CD4-positive, alpha-beta memory T cell (primary cell): ENCODE measurements at regions of chr3 and their contacts with region 1.

Region 1: DNA sequence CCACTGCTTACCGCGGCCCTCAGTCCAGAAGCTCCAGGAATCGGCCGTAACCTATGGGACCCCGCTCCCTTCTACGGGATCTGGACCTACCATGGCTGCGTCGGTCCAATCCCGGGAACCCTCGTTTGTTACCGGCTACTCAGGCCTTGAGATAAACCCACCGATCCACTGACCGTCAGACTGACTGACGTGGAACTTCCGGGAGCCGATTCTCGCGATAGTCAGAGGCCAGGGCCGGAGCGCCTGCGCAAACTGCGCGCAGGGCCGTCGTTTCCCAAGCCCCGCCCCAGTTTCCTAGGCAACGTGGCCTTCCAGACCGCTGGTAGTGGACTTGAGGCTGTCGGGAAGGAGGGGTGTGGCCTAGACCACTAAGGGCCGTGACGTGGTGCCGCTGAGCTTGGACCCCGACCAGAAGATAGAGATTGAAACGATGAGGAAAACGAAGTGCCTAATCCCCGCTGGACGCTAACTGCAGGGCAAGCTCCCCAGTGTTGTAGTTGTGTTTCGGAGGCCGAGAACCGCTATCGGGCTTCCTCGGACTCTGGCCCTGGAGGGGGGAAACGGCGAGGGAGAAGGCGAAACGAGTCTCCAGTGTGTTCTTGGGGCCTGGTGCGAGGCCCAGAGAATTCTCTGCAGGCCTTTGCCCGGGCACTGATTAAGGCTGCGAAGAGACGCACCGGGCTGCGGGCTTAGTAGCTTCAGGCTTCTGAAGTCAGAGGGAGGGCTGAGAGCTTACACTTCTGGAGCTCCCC is at the start of gene COPB2:
- DNase-seq: peak; percentile 91 to 94 (median 92)
- H3K4me3 ChIP-seq: peak within 1 kb of the TSS; percentile 92 to 97
- H3K4me3 Mint-ChIP-seq: peak within 1 kb of the TSS; percentile 92 to 99 (median 98)
- H3K27ac ChIP-seq: peak within 1 kb of the TSS; percentile 93
- H3K27ac Mint-ChIP-seq: peak within 1 kb of the TSS; percentile 96 to 100 (median 100)
- H3K4me1 ChIP-seq: peaks cover 34% of the 10 kb centered on the region
- H3K4me1 Mint-ChIP-seq: peaks cover 30 to 50% (median 41%) of the 10 kb centered on the region in 4 donors
- H3K27me3 ChIP-seq: no peaks in the 10 kb centered on the region
- H3K27me3 Mint-ChIP-seq: no peaks in the 10 kb centered on the region
- total RNA-seq, gene COPB2: 78.1 to 79.8 TPM

Region 2: DNA sequence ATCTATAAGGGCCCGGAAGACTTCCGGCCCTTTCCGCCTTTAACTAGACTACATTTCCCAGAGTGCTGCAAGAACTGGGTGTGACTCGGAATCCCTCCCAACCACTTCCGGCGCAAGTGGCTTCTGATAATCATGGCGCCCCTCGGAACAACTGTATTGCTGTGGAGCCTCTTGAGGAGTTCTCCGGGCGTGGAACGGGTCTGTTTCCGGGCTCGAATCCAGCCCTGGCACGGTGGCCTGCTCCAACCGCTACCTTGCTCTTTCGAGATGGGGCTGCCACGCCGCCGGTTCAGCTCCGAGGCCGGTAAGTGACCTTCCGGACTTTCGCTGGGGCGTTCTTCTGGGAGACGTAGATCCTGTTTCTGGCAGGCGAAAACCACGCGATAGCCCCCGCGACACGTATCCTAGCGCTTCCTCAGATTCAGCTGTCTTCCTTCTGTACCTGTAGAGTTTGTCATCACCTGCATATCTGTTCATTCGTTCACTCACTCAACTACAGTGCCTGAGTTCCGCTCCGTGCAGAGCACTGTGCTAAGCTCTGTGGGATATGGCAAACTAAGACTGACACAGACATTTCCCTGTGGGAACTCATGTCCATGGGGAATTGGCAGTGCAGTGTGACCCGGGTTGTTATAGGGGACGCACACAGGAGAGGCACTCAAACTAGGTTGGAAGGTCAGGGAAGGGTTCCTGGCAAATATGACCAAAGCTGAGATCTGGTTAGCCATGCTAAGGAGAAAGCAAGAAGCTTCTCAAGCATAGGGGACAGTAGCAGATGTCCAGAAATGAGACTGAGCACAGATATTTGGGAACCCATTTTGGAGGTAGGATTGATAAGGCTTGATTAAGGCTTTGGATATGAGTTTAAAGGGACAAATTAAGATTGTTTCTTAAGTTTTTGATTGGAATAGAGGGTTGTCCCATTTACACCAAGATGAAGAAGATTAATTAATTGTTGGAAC is 45.5 kb before region 1 on chr3 and contains the start of gene MRPS22:
- CTCF ChIA-PET with region 1: no interaction called
- POLR2A ChIA-PET with region 1: interaction called, 13 read pairs
- intact Hi-C with region 1: loop called (anchors 1 kb)
- DNase-seq: peak; percentile 84 to 90 (median 84)
- H3K4me3 ChIP-seq: peak within 1 kb of the TSS; percentile 66 to 95
- H3K4me3 Mint-ChIP-seq: peak within 1 kb of the TSS in 2 of 8 donors; percentile 67 to 71
- H3K27ac ChIP-seq: peak within 1 kb of the TSS; percentile 79
- H3K27ac Mint-ChIP-seq: peak within 1 kb of the TSS in 3 of 7 donors; percentile 78 to 89 (median 81)
- H3K4me1 ChIP-seq: peaks cover 24% of the 10 kb centered on the region
- H3K4me1 Mint-ChIP-seq: peaks cover 3 to 11% (median 7%) of the 10 kb centered on the region in 4 donors
- H3K27me3 ChIP-seq: peaks cover 4% of the 10 kb centered on the region
- H3K27me3 Mint-ChIP-seq: peaks cover 0 to 7% of the 10 kb centered on the region in 2 donors
- total RNA-seq, gene MRPS22: 33.4 to 36.9 TPM

Region 3: DNA sequence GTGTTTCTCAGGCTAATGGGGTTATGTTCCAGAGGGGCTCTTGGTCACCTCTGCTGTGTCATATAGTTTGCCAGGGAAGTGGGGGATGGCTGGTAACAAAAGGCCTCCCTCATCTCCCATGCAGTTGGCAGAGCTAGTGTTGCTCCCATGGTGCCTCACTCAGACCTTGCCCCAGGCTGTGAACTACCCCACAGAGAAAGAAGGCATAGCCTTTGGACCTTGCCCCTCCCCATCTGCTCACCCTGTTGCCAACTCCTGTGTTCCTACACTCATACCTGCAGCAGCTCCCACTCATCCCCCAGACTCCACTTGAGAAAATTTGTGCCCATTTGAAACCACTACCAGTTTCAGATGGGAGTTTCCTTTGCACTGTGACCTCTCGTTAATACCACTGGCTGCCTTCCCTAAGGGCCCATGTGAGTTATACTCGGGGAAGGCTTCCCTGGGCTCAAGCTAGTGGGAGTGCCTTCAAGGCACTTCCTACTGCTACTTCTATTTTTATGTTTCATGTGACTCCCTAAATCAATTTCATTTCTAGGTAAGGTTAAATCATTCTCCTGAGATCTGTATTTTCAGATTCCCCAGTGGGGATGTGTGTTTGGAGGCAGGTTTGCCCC is 25.1 kb after region 1 on chr3:
- CTCF ChIA-PET with region 1: no interaction called
- POLR2A ChIA-PET with region 1: no interaction called
- intact Hi-C with region 1: no loop called
- DNase-seq: no peak
- H3K4me3 ChIP-seq: no peak overlapping the region
- H3K4me3 Mint-ChIP-seq: no peak overlapping the region
- H3K27ac ChIP-seq: no peak overlapping the region
- H3K27ac Mint-ChIP-seq: no peak overlapping the region
- H3K4me1 ChIP-seq: no peaks in the 10 kb centered on the region
- H3K4me1 Mint-ChIP-seq: no peaks in the 10 kb centered on the region
- H3K27me3 ChIP-seq: no peaks in the 10 kb centered on the region
- H3K27me3 Mint-ChIP-seq: peaks cover 0 to 3% of the 10 kb centered on the region in 2 donors

Region 4: DNA sequence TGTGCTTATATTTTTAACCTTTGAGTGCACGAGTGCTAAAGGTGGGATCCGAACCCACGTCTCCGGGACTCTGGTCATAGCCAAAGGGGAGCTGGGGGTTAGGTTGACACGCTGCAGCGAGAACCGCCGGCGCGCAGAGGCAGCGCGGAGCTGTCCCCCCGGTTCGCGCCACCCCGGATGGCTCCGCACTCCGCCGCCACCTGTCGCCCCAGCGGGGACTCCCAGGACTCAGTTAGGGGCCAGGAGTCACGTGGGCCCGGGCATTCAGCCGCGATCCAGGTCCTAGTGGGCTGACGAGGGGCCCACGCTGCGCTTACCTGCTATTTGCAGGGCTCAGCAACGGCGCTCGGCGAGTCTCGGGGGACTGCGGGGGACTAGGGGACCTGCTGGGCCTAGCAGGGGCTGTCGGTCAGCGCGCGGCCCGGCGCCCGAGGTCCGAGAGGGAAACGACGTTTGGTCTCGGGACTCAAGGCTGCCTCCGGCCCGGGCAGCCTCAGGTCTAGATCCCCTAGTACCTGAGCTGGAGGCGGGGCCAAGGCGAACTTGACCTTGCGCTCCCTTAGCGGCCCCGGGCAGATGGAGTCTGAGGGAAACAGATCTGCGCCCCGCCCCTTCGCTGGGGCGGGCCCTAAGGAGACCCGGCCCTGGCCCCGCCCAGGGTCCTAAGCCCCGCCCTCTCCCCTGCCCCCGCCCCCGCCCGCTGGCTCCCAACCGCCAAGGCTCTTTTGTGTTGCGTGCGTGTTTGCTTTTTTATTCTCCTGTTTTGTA is 287.9 kb after region 1 on chr3 and contains the start of gene NMNAT3:
- CTCF ChIA-PET with region 1: no interaction called
- POLR2A ChIA-PET with region 1: interaction called, 3 read pairs
- intact Hi-C with region 1: loop called (anchors 10 kb)
- DNase-seq: peak; percentile 67 to 73 (median 72)
- H3K4me3 ChIP-seq: peak within 1 kb of the TSS in 1 of 2 donors; percentile 73
- H3K4me3 Mint-ChIP-seq: peak within 1 kb of the TSS; percentile 72 to 84 (median 82)
- H3K27ac ChIP-seq: peak within 1 kb of the TSS; percentile 36
- H3K27ac Mint-ChIP-seq: peak within 1 kb of the TSS in 5 of 7 donors; percentile 21 to 44 (median 31)
- H3K4me1 ChIP-seq: peaks cover 5% of the 10 kb centered on the region
- H3K4me1 Mint-ChIP-seq: peaks cover 4 to 9% (median 7%) of the 10 kb centered on the region in 4 donors
- H3K27me3 ChIP-seq: no peaks in the 10 kb centered on the region
- H3K27me3 Mint-ChIP-seq: peaks cover 0 to 3% of the 10 kb centered on the region in 2 donors
- total RNA-seq, gene NMNAT3: 2.6 to 4.0 TPM